Activated CD4-positive, alpha-beta memory T cell treated with anti-CD3 and anti-CD28 coated beads for 36 hours (primary cell): ENCODE measurements at regions of chr19 and their contacts with region 1.

Region 1: DNA sequence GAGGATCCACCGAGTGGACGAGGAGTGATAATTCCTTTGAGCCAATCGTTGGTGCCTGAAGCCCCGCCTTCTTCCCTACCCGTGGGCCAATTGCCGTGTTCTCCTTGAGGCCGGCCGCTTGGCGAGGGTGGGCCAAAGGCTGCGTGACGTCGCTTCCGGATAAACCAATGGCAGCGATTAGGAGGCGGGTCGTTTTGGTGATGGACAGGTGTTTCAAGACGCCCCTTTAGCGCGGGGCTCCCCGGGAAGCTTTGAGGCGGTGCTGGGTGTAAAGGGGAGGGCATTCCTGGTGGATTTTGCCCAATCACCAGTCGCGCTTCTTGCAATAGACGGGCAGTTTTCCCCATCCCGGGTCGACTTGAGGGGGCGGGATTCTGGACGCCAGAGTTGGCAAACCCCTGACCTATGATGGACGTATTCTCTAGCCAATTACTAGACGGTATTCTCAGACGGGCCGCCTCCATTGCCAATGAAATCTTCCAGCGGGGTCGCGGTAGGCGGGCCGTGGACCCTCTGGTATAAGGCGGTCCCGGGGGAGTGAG is 310 bp upstream of the PRMT1 start:
- DNase-seq: peak; percentile 100
- H3K4me3 Mint-ChIP-seq: peak overlapping the region; percentile 98
- H3K27ac Mint-ChIP-seq: peak overlapping the region; percentile 96
- H3K4me1 Mint-ChIP-seq: peaks cover 42% of the 10 kb centered on the region
- H3K27me3 Mint-ChIP-seq: no peaks in the 10 kb centered on the region

Region 2: GRCh38 chr19:49347846-49348245 is 328.9 kb before region 1 on chr19:
- CTCF ChIA-PET with region 1: no interaction called
- POLR2A ChIA-PET with region 1: no interaction called
- intact Hi-C with region 1: no loop called
- DNase-seq: peak; percentile 36
- H3K4me3 Mint-ChIP-seq: no peak overlapping the region
- H3K27ac Mint-ChIP-seq: no peak overlapping the region
- H3K4me1 Mint-ChIP-seq: peaks cover 5% of the 10 kb centered on the region
- H3K27me3 Mint-ChIP-seq: no peaks in the 10 kb centered on the region

Region 3: DNA sequence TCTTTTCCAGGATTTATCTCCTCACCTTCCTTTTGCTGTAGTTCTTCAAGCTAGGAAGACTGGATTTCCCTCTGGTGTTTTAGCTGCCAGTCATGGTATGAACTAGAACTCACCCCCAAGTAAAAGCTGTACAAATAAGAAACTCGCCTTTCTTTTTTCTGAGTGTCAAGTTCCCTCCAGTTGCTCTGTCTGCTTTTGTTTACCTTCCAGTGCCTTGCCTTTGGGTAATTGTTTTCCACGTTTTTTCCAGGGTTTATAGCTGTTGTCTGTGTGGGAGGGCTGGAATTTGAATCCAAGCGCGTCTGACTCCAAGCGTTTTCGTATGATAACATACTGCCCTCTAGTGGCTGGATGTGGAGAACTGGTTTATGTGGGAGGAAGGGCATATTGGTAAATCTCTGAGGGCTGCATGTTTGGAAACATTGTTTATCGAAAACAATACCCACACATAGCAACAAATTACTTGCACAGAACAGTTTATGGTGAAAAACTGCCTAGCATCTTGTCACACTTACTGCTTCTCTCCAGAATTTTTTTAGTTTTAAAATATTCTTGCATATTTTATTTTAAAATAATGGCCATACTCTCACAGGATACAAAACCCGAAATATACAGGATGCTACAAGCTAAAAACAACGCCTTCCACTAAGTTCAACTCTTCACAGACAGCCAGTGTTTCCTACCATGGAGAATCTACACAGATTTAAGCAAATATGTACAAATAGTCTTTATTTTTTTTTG is 129.8 kb before region 1 on chr19:
- CTCF ChIA-PET with region 1: interaction called, 4 read pairs
- POLR2A ChIA-PET with region 1: no interaction called
- intact Hi-C with region 1: loop called (anchors 1 kb)
- DNase-seq: peak; percentile 68
- H3K4me3 Mint-ChIP-seq: peak overlapping the region; percentile 75
- H3K27ac Mint-ChIP-seq: peak overlapping the region; percentile 59
- H3K4me1 Mint-ChIP-seq: peaks cover 29% of the 10 kb centered on the region
- H3K27me3 Mint-ChIP-seq: no peaks in the 10 kb centered on the region

Region 4: GRCh38 chr19:49616532-49616931 is 60.2 kb before region 1 on chr19:
- CTCF ChIA-PET with region 1: interaction called, 14 read pairs
- POLR2A ChIA-PET with region 1: no interaction called
- intact Hi-C with region 1: no loop called
- DNase-seq: no peak
- H3K4me3 Mint-ChIP-seq: no peak overlapping the region
- H3K27ac Mint-ChIP-seq: no peak overlapping the region
- H3K4me1 Mint-ChIP-seq: peaks cover 14% of the 10 kb centered on the region
- H3K27me3 Mint-ChIP-seq: no peaks in the 10 kb centered on the region

Region 5: DNA sequence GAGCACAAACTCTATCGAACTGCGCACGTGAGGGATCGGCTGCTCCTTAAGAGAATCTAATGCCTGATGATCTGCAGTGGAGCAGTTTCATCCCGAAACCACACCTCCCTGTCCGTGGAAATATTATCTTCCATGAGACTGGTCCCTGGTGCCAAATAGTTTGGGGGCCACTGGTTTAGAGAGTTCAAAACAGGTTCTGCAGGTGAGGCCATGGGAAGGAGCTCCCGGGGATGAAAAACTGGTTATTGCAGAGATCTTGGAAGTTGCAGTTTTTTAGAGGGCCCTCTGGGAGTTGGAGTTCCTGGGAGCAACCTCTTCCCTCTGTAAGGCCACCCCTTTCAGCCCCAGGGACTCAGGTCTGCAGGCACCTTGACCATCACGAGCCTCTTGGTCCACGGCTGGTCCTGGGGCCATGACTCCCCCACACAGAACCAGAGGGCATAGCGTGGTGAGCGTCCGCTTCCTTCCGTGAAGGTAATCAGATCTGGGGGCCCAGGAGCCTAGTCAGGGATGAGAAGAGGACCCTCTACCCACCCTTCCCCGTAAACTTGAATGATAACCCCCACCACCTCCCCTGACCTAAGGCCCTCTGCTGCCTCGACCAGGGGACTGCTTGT is 16.3 kb before region 1 on chr19:
- CTCF ChIA-PET with region 1: interaction called, 31 read pairs
- POLR2A ChIA-PET with region 1: interaction called, 29 read pairs
- intact Hi-C with region 1: loop called (anchors 1 kb)
- DNase-seq: no peak
- H3K4me3 Mint-ChIP-seq: no peak overlapping the region
- H3K27ac Mint-ChIP-seq: no peak overlapping the region
- H3K4me1 Mint-ChIP-seq: peaks cover 21% of the 10 kb centered on the region
- H3K27me3 Mint-ChIP-seq: no peaks in the 10 kb centered on the region

Region 6: GRCh38 chr19:49869441-49870176 is 192.8 kb after region 1 on chr19:
- CTCF ChIA-PET with region 1: no interaction called
- POLR2A ChIA-PET with region 1: no interaction called
- intact Hi-C with region 1: loop called (anchors 2 kb)
- DNase-seq: peak; percentile 96
- H3K4me3 Mint-ChIP-seq: no peak overlapping the region
- H3K27ac Mint-ChIP-seq: no peak overlapping the region
- H3K4me1 Mint-ChIP-seq: peaks cover 50% of the 10 kb centered on the region
- H3K27me3 Mint-ChIP-seq: no peaks in the 10 kb centered on the region